Mammary epithelial cell (primary cell): ENCODE measurements at regions of chr9 and their contacts with region 1.

Region 1: DNA sequence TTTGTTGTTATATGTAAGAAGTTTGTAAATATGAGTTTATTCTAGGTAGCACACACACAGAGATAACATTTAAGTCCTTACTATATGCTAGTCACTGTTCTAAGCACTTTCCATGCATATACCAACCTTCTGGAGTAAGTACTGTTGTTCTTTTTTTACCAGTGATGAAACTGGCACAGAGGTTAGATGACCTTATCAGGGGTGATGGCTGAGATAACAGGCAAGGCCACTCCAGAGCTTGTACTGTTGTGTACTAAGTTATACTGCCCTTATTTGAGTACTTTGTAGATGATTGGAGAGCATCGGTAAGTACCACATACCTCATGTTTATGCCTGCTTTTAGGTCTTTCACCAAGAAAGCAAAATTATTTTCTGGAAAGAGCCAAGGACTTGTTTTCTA is 6.2 kb downstream of the POLR1E start:
- DNase-seq: no peak
- H3K4me3 ChIP-seq: no peak overlapping the region
- H3K27ac ChIP-seq: no peak overlapping the region
- H3K4me1 ChIP-seq: peaks cover 9% of the 10 kb centered on the region
- H3K27me3 ChIP-seq: no peaks in the 10 kb centered on the region
- CTCF ChIP-seq: no peak

Region 2: GRCh38 chr9:37441776-37442370 is 50.1 kb before region 1 on chr9:
- CTCF ChIA-PET with region 1: no interaction called
- dilution Hi-C with region 1: loop called (anchors 5 kb)
- in situ Hi-C with region 1: no loop called
- intact Hi-C with region 1: no loop called
- DNase-seq: no peak
- H3K4me3 ChIP-seq: no peak overlapping the region
- H3K27ac ChIP-seq: no peak overlapping the region
- H3K4me1 ChIP-seq: peaks cover 2% of the 10 kb centered on the region
- H3K27me3 ChIP-seq: no peaks in the 10 kb centered on the region
- CTCF ChIP-seq: no peak

Region 3: GRCh38 chr9:37549527-37549926 is 57.6 kb after region 1 on chr9:
- CTCF ChIA-PET with region 1: no interaction called
- dilution Hi-C with region 1: loop called (anchors 5 kb)
- in situ Hi-C with region 1: no loop called
- intact Hi-C with region 1: no loop called
- DNase-seq: peak; percentile 19
- H3K4me3 ChIP-seq: no peak overlapping the region
- H3K27ac ChIP-seq: no peak overlapping the region
- H3K4me1 ChIP-seq: no peaks in the 10 kb centered on the region
- H3K27me3 ChIP-seq: no peaks in the 10 kb centered on the region
- CTCF ChIP-seq: no peak